ENCODE measurements at regions of chr20 and their contacts with region 1.

Region 1: DNA sequence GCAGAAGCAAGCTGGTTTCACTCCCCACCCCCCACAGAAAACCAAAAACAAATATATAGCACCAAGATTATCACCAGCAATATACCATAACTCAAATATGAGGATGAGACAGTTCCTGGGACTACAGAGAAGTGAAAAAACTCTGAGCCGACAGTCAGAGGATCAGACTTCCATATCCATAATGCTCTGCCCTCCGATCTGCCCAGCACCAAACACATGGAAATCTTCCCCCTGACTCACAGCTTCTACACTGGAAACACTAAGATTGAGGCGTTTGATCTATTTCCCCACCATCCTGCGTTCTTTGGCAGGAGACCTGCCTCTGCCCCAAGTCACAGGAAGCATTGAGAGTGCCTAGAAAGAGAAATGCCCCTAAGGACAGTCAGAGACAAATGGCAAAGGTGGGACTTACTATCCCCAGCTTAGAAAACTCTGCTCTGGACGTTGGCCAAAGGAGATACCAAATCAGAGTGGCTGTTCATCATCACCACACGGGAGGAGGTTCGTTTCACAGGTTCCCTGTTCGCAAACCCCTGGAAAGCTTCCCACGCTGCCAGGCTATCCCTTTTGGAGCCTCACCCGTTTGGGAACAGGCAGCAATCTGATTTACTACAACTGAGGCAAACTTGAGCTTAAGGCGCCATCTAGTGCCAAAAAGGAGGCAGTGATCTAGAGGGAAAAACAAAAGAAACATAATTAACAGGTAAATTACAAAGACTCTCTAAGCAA is 48.7 kb upstream of the SRSF6 start:
- DNase-seq: peak; percentile 33 to 34
- H3K4me3 ChIP-seq: no peak overlapping the region
- H3K4me1 ChIP-seq: no peaks in the 10 kb centered on the region
- H3K27me3 ChIP-seq: no peaks in the 10 kb centered on the region

Region 2: GRCh38 chr20:41738604-41739206 is 1670.3 kb before region 1 on chr20:
- in situ Hi-C with region 1: loop called (anchors 25 kb)
- DNase-seq: peak; percentile 13 to 64
- H3K4me3 ChIP-seq: no peak overlapping the region
- H3K4me1 ChIP-seq: no peaks in the 10 kb centered on the region
- H3K27me3 ChIP-seq: no peaks in the 10 kb centered on the region; the same call in 1 of the 2 replicates

Region 3: GRCh38 chr20:41955999-41956705 is 1452.9 kb before region 1 on chr20:
- in situ Hi-C with region 1: loop called (anchors 25 kb)
- DNase-seq: peak; percentile 30 to 58
- H3K4me3 ChIP-seq: no peak overlapping the region
- H3K4me1 ChIP-seq: no peaks in the 10 kb centered on the region
- H3K27me3 ChIP-seq: no peaks in the 10 kb centered on the region

Region 4: GRCh38 chr20:43322851-43323250 is 86.2 kb before region 1 on chr20:
- in situ Hi-C with region 1: no loop called
- DNase-seq: no peak
- H3K4me3 ChIP-seq: no peak overlapping the region
- H3K4me1 ChIP-seq: no peaks in the 10 kb centered on the region
- H3K27me3 ChIP-seq: no peaks in the 10 kb centered on the region

Region 5: GRCh38 chr20:43893183-43893582 is 484.2 kb after region 1 on chr20:
- in situ Hi-C with region 1: no loop called
- DNase-seq: no peak
- H3K4me3 ChIP-seq: no peak overlapping the region
- H3K4me1 ChIP-seq: no peaks in the 10 kb centered on the region
- H3K27me3 ChIP-seq: no peaks in the 10 kb centered on the region

Region 6: GRCh38 chr20:43914311-43915210 is 505.5 kb after region 1 on chr20 and contains the start of gene TOX2:
- in situ Hi-C with region 1: no loop called
- DNase-seq: peak; percentile 31 to 81
- H3K4me3 ChIP-seq: peak within 1 kb of the TSS; percentile 41
- H3K4me1 ChIP-seq: no peaks in the 10 kb centered on the region
- H3K27me3 ChIP-seq: no peaks in the 10 kb centered on the region

Measured in HAP-1 (cell line).